K562 (cell line): ENCODE measurements at regions of chr1 and their contacts with region 1.

Region 1: GRCh38 chr1:52424231-52424636 is 19.8 kb downstream of the PRPF38A start:
- DNase-seq: peak in 2 of 4 experiments; percentile 30 to 32
- ATAC-seq: peak; percentile 80
- H3K4me3 ChIP-seq: no peak overlapping the region
- H3K27ac ChIP-seq: peak overlapping the region; percentile 56
- H3K4me1 ChIP-seq: peaks cover 0 to 21% of the 10 kb centered on the region in 2 experiments; a peak in 4 of 5 replicates
- H3K27me3 ChIP-seq: no peaks in the 10 kb centered on the region
- CTCF ChIP-seq: no peak
- EP300 ChIP-seq: no peak; the same call in 1 of the 2 replicates
- POLR2A ChIP-seq: no peak
- RAD21 ChIP-seq: 0 out of 4 replicates have a peak, but pooled peaks of 1 of the 2 experiments have one; percentile 15

Region 2: GRCh38 chr1:52268372-52268771 is 155.9 kb before region 1 on chr1:
- CTCF ChIA-PET with region 1: no interaction called
- POLR2A ChIA-PET with region 1: no interaction called
- in situ Hi-C with region 1: no loop called
- intact Hi-C with region 1: no loop called
- DNase-seq: no peak
- ATAC-seq: no peak
- H3K4me3 ChIP-seq: no peak overlapping the region
- H3K27ac ChIP-seq: no peak overlapping the region
- H3K4me1 ChIP-seq: no peaks in the 10 kb centered on the region
- H3K27me3 ChIP-seq: no peaks in the 10 kb centered on the region
- CTCF ChIP-seq: no peak
- EP300 ChIP-seq: no peak
- POLR2A ChIP-seq: no peak
- RAD21 ChIP-seq: no peak

Region 3: DNA sequence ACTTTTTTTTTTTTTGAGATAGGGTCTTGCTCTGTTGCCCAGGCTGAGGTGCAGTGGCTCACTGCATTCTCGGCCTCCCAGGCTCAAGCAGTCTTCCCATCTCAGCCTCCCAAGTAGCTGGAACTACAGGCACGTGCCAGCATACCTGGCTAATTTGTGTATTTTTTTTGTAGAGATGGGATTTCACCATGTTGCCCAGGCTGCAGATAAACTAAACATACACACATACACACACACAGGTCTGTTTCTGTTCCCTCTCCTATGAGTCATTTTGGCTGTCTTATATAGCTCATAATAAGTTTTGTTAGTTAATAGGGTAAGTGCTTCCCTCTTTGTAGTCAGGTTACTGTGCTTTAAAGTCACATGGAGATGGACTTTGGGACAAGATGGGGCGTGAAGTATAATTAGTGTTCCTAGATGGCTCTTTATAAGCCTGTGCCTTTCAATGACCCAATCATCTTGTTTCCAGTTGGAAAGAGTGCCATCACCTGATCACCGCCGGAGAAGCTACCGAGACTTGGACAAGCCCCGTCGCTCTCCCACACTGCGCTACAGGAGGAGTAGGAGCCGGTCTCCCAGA is 10.7 kb before region 1 on chr1:
- CTCF ChIA-PET with region 1: no interaction called
- POLR2A ChIA-PET with region 1: interaction called, 58 read pairs
- in situ Hi-C with region 1: no loop called
- intact Hi-C with region 1: no loop called
- DNase-seq: no peak
- ATAC-seq: no peak
- H3K4me3 ChIP-seq: no peak overlapping the region
- H3K27ac ChIP-seq: no peak overlapping the region
- H3K4me1 ChIP-seq: no peaks in the 10 kb centered on the region
- H3K27me3 ChIP-seq: no peaks in the 10 kb centered on the region
- CTCF ChIP-seq: no peak
- EP300 ChIP-seq: no peak
- POLR2A ChIP-seq: no peak
- RAD21 ChIP-seq: no peak

Region 4: DNA sequence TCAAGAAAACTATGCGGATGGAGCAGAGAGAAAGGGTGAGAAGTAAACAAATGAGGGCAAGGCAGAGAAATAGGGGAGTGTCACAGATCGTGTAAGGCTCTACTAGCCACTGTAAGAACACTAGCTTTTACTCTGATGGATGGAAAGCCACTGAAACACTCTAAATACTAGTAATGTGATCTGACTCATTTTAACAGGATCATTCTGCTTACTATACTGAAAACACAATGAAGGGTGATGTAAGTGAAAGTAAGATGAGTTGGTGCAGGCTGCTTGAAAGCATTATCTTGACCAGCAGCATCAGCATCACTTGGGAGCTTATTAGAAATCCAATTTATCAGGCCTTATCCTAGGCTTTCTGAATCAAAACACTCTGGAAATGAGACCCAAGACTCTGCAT is 95.9 kb after region 1 on chr1:
- CTCF ChIA-PET with region 1: no interaction called
- POLR2A ChIA-PET with region 1: no interaction called
- in situ Hi-C with region 1: no loop called
- intact Hi-C with region 1: no loop called
- DNase-seq: no peak
- ATAC-seq: peak; percentile 72
- H3K4me3 ChIP-seq: no peak overlapping the region
- H3K27ac ChIP-seq: no peak overlapping the region
- H3K4me1 ChIP-seq: no peaks in the 10 kb centered on the region
- H3K27me3 ChIP-seq: no peaks in the 10 kb centered on the region
- CTCF ChIP-seq: no peak
- EP300 ChIP-seq: no peak; the same call in 1 of the 2 replicates
- POLR2A ChIP-seq: no peak
- RAD21 ChIP-seq: no peak

Region 5: GRCh38 chr1:52613636-52614373 is 189.6 kb after region 1 on chr1:
- CTCF ChIA-PET with region 1: no interaction called
- POLR2A ChIA-PET with region 1: no interaction called
- in situ Hi-C with region 1: no loop called
- intact Hi-C with region 1: no loop called
- DNase-seq: peak; percentile 71 to 93 (median 80)
- ATAC-seq: peak; percentile 93
- H3K4me3 ChIP-seq: no peak overlapping the region
- H3K27ac ChIP-seq: peak overlapping the region; percentile 59
- H3K4me1 ChIP-seq: peaks cover 28 to 36% of the 10 kb centered on the region in 2 experiments; a peak in 4 of 5 replicates
- H3K27me3 ChIP-seq: no peaks in the 10 kb centered on the region
- CTCF ChIP-seq: no peak
- EP300 ChIP-seq: peak; percentile 91
- POLR2A ChIP-seq: no peak
- RAD21 ChIP-seq: no peak